ENCODE measurements at regions of chr2 and their contacts with region 1.

Region 1: GRCh38 chr2:179543361-179543901 is 278.8 kb upstream of the SESTD1 start:
- DNase-seq: no peak
- ATAC-seq: no peak
- H3K4me3 ChIP-seq: no peak overlapping the region
- H3K27ac ChIP-seq: no peak overlapping the region
- H3K4me1 ChIP-seq: no peaks in the 10 kb centered on the region
- H3K27me3 ChIP-seq: peaks cover 0 to 2% (median 0%) of the 10 kb centered on the region in 9 donors
- CTCF ChIP-seq: no peak
- POLR2A ChIP-seq: no peak

Region 2: GRCh38 chr2:179626261-179626660 is 82.8 kb after region 1 on chr2:
- intact Hi-C with region 1: loop called in 1 of 10 experiments (anchors 2 kb)
- DNase-seq: no peak
- ATAC-seq: no peak
- H3K4me3 ChIP-seq: no peak overlapping the region
- H3K27ac ChIP-seq: no peak overlapping the region
- H3K4me1 ChIP-seq: peaks cover 0 to 9% (median 0%) of the 10 kb centered on the region in 12 donors
- H3K27me3 ChIP-seq: no peaks in the 10 kb centered on the region
- CTCF ChIP-seq: no peak
- POLR2A ChIP-seq: no peak

Measured in heart left ventricle (tissue), 16 donors.